Mucosa of descending colon (tissue), 3 donors: ENCODE measurements at regions of chr2 and their contacts with region 1.

Region 1: GRCh38 chr2:84495539-84496146 is 20.7 kb upstream of the DNAH6 start:
- DNase-seq: peak in 1 of 3 donors; percentile 64
- ATAC-seq: peak; percentile 84
- H3K4me3 ChIP-seq: no peak overlapping the region
- H3K4me1 ChIP-seq: peaks cover 3% of the 10 kb centered on the region
- CTCF ChIP-seq: peak; percentile 38

Region 2: GRCh38 chr2:84619794-84620371 is 124.2 kb after region 1 on chr2:
- intact Hi-C with region 1: loop called in 1 of 2 experiments (anchors 10 kb)
- DNase-seq: no peak
- ATAC-seq: peak; percentile 60
- H3K4me3 ChIP-seq: no peak overlapping the region
- H3K4me1 ChIP-seq: no peaks in the 10 kb centered on the region
- CTCF ChIP-seq: no peak

Region 3: DNA sequence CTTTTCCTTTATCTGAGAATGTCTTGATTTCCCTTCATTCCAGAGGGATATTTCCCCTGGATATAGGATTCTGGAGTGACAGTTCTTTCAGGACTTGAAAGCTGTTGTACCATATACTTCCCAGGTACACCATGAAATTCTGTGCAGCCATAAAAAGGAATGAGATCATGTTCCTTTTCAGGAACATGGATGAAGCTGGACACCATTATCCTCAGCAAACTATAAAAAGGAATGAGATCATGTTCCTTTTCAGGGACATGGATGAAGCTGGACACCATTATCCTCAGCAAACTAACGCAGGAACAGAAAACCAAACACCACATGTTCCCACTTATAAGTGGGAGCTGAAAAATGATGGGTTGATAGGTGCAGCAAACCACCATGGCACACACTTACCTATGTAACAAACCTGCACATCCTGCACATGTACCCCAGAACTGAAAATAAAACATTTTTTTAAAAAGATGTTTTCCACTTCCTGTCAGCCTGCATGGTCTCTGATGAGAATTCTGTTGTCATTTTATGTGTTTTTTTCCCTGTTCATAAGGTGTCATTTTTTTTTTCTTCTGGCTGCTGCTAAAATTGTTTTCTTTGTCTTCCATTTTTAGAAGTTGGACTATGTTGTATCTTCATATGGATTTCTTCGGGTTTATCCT is 154.0 kb after region 1 on chr2:
- intact Hi-C with region 1: no loop called
- DNase-seq: no peak
- ATAC-seq: peak; percentile 33
- H3K4me3 ChIP-seq: no peak overlapping the region
- H3K4me1 ChIP-seq: no peaks in the 10 kb centered on the region
- CTCF ChIP-seq: no peak

Region 4: GRCh38 chr2:84881581-84882414 is 386.2 kb after region 1 on chr2:
- intact Hi-C with region 1: loop called (anchors 5 to 10 kb)
- DNase-seq: peak; percentile 88 to 95 (median 91)
- ATAC-seq: peak; percentile 67
- H3K4me3 ChIP-seq: no peak overlapping the region
- H3K4me1 ChIP-seq: peaks cover 5% of the 10 kb centered on the region
- CTCF ChIP-seq: peak; percentile 59

Region 5: GRCh38 chr2:84925724-84926376 is 430.2 kb after region 1 on chr2:
- intact Hi-C with region 1: loop called in 1 of 2 experiments (anchors 5 kb)
- DNase-seq: peak; percentile 98 to 100 (median 100)
- ATAC-seq: peak; percentile 91
- H3K4me3 ChIP-seq: no peak overlapping the region
- H3K4me1 ChIP-seq: peaks cover 30% of the 10 kb centered on the region
- CTCF ChIP-seq: peak; percentile 97